Colonic mucosa (tissue), 4 donors: ENCODE measurements at regions of chr1 and their contacts with region 1.

Region 1: DNA sequence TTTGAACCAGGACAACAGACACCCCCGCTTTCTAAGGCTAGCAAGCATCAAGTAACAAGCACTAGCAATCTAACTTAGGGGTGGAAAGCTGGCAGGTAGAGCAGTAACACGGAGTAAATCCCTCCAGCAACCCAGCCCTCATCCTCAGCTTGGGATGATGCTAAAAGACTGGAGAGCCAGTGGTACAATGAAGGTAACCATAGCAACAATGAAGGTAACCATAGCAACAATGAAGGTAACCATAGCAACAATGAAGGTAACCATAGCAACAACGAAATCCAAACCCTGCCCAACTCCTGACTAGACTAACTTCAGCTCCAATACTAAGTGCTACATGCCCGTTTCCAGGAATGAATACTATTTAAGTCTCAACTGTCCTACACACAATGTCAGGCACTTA is 22.2 kb upstream of the EIF4G3 start:
- DNase-seq: no peak
- H3K4me3 ChIP-seq: no peak overlapping the region
- H3K27ac ChIP-seq: no peak overlapping the region
- H3K4me1 ChIP-seq: no peaks in the 10 kb centered on the region
- H3K27me3 ChIP-seq: no peaks in the 10 kb centered on the region
- CTCF ChIP-seq: no peak

Region 2: DNA sequence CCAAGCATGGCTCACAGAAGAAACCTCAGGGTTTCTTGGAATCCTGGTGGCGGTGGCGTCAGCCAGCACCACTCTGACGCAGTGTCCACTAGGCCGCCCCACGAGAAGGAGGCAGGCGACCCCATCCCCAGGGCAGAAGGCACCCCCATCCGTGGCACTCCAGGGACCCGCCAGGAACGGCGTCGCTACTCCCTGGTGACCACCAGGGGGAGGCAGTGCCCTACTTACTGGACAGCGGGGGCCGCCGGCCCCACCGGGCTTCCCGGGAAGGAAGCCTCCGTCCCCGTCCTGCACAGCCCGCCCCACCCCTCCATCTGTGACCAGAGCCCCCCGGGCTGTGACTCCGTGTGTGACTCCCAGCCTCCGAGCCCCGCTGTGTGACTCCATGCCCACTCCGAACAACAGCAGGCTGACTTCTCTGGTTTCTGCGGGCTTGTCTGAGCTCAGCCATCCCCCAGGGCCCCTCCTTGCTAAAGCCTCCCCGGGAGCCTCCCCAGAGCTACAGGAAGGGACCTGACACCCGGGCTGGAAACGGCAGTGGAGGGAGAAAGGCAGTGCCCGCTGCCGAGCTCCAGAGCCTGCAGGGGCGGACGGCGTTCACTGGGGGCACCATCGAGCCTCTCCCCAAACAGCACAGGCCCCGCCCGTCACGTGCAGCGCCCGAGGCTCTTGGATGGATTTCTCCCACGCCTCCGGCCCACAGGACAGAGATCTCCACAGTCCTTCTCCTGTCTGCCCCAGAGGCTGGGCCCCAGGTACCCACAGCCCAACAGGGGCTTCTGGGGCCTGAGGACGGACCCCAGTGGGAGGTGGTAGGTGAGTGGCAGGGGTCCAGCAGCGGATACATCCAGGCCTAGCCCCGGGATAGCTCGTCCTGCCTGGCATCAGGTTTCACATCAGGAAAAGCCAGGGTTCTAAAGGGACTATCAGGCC is 502.3 kb before region 1 on chr1:
- intact Hi-C with region 1: loop called (anchors 5 kb)
- DNase-seq: peak; percentile 86
- H3K4me3 ChIP-seq: peak overlapping the region; percentile 57
- H3K27ac ChIP-seq: no peak overlapping the region
- H3K4me1 ChIP-seq: peaks cover 3% of the 10 kb centered on the region
- H3K27me3 ChIP-seq: no peaks in the 10 kb centered on the region
- CTCF ChIP-seq: peak; percentile 96

Region 3: DNA sequence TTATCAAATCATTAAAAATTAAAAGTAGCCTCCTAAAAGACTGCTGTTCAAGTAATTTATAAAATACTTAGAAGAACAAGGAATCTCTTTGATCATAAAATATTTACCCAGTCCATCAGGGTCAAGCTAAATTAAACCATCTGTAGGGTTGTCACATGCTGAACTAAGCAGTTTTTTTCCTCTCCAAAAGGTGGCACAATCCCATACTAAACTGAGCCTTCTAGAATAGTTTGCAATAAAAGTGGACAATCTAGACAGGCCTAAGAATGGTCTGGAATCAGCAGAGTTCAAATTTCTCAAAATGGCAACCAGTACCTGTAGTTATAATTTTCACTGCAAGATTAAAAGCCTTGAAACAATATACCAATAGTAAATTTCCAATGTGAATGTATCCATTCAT is 217.0 kb before region 1 on chr1:
- intact Hi-C with region 1: loop called (anchors 5 kb)
- DNase-seq: no peak
- H3K4me3 ChIP-seq: no peak overlapping the region
- H3K27ac ChIP-seq: no peak overlapping the region
- H3K4me1 ChIP-seq: no peaks in the 10 kb centered on the region
- H3K27me3 ChIP-seq: no peaks in the 10 kb centered on the region
- CTCF ChIP-seq: peak; percentile 13